ENCODE measurements at regions of chr5 and their contacts with region 1.

Region 1: DNA sequence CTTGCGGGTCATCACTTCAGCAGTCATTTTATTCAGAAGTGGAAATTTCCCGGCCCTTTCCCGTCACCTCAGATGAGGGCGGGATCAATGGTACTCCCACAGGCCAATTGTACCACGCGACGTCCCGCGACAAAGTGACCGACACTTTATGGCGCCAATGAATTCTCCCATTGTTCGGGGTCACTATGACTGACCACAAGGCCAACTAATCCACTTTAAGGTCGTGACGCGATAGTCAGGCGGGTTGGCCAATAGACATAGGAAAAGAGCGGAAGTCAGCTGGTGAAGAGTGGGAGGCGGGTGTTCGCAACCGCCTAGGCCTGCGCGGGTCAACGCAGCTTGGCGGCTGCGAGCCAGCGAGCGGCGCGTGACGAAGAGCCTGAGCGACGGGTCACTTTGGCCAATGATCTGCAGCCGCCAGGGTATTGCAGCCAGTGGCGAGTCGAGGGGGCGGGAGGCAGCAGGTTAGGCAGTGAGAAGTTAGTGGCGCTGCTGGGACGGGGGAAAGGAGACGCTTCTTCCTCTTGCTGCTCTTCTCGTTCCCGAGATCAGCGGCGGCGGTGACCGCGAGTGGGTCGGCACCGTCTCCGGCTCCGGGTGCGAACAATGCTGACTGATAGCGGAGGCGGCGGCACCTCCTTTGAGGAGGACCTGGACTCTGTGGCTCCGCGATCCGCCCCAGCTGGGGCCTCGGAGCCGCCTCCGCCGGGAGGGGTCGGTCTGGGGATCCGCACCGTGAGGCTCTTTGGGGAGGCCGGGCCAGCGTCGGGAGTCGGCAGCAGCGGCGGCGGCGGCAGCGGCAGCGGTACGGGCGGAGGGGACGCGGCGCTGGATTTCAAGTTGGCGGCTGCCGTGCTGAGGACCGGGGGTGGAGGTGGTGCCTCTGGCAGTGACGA is at the start of gene ANKHD1:
- DNase-seq: peak; percentile 99
- ATAC-seq: peak; percentile 88
- H3K4me3 Mint-ChIP-seq: no peak within 1 kb of the TSS
- H3K27ac Mint-ChIP-seq: no peak within 1 kb of the TSS
- H3K4me1 Mint-ChIP-seq: peaks cover 33% of the 10 kb centered on the region
- H3K27me3 Mint-ChIP-seq: no peaks in the 10 kb centered on the region
- total RNA-seq, gene ANKHD1: 108 to 112 TPM

Region 2: DNA sequence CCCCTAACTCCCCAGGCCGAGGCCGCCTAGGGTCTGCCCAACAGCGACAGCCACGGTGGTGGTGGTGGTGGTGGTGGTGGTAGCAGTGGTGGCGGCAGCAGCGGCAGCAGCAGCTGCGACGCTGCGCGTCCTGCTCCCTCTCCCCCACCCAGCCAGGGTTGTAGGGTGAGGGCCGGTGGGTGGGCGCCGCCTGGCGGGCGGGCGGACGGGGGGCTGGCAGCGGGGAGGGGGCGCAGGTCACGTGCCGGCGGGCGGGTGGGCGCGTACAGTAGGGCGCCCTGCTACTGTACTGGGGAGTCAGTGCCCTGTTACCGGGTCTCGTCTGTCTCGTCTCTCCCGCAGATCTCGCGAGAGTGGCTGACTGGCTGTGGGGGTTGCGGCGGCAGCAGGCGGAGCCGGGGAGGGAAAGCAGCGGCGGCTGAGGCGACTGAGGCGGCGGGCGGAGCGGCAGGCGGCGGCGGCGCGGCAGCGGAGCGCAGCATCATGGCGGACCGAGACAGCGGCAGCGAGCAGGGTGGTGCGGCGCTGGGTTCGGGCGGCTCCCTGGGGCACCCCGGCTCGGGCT is 287.8 kb before region 1 on chr5 and contains the start of gene PURA:
- CTCF ChIA-PET with region 1: no interaction called
- POLR2A ChIA-PET with region 1: no interaction called
- DNase-seq: peak; percentile 97
- ATAC-seq: peak; percentile 91
- H3K4me3 Mint-ChIP-seq: peak within 1 kb of the TSS; percentile 93
- H3K27ac Mint-ChIP-seq: peak within 1 kb of the TSS; percentile 94
- H3K4me1 Mint-ChIP-seq: peaks cover 70% of the 10 kb centered on the region
- H3K27me3 Mint-ChIP-seq: peaks cover 23% of the 10 kb centered on the region
- total RNA-seq, gene PURA: 12.5 to 13.4 TPM

Region 3: GRCh38 chr5:140321796-140322195 is 79.8 kb before region 1 on chr5:
- CTCF ChIA-PET with region 1: no interaction called
- POLR2A ChIA-PET with region 1: no interaction called
- DNase-seq: no peak
- ATAC-seq: no peak
- H3K4me3 Mint-ChIP-seq: no peak overlapping the region
- H3K27ac Mint-ChIP-seq: no peak overlapping the region
- H3K4me1 Mint-ChIP-seq: no peaks in the 10 kb centered on the region
- H3K27me3 Mint-ChIP-seq: peaks cover 6% of the 10 kb centered on the region

Region 4: DNA sequence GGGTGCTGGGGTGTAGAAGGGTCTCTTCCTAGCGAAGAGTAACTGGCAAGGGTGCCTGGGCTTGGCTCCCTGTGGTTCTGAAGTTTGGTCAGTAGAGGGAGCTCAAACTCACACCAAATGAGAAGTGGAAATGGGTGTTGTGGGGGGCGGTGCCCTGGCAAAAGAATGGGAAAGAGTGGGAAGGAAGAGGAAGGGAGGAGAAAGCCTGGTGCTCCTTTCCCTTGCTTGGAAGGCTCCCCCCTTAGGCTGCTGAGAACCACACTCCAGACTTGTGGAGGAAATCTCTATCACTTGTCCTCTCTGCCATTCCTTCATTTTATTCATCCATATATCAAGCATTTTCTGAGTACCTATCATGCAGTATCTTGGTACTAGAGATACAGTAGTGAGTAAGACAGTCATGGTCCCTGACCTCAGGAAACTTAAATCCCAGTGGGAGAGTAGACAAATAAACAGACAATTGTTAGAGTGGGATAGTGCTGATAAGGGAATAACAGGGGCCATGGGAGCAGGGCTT is 28.6 kb before region 1 on chr5:
- CTCF ChIA-PET with region 1: interaction called, 21 read pairs
- POLR2A ChIA-PET with region 1: no interaction called
- DNase-seq: peak; percentile 59
- ATAC-seq: peak; percentile 63
- H3K4me3 Mint-ChIP-seq: no peak overlapping the region
- H3K27ac Mint-ChIP-seq: no peak overlapping the region
- H3K4me1 Mint-ChIP-seq: peaks cover 7% of the 10 kb centered on the region
- H3K27me3 Mint-ChIP-seq: no peaks in the 10 kb centered on the region

Region 5: DNA sequence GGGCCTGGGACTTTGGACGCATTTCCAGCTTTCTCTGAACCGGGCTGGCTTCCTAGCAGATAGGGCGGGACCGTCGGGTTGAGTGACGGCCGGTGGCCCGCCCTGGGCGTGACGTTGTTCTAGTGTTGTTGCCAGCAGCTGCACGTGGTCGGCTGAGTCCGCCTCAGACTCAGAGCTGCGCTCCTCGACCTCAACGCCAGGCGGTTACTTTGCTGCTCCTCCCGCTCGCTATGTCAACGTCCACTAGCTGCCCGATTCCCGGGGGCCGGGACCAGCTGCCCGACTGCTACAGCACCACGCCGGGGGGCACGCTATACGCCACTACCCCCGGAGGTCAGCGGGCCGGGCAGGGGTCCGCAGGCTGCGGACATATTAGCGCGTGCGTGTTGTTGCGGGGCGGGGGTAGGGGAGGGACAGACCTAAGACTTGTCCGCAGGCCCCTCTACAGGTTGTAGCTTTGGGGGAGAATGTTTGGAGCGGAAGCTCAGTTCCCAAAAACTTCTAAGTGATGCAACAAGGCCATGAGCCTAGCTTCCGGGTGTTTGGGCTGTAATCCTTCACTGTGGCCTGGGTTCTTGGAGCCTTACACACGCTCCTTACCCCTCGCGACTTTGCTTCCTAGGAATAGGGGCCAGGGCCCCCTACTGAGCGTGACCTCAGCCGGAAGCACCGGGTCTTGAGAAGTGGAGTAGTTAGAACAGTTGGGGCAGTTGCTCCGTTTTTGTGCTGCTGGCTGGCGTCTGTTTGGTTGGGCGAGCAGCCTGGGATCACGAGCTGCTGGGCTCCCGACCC is 146.1 kb after region 1 on chr5 and contains the start of gene EIF4EBP3:
- CTCF ChIA-PET with region 1: no interaction called
- POLR2A ChIA-PET with region 1: interaction called, 10 read pairs
- DNase-seq: peak; percentile 91
- ATAC-seq: peak; percentile 97
- H3K4me3 Mint-ChIP-seq: peak within 1 kb of the TSS; percentile 80
- H3K27ac Mint-ChIP-seq: peak within 1 kb of the TSS; percentile 95
- H3K4me1 Mint-ChIP-seq: peaks cover 42% of the 10 kb centered on the region
- H3K27me3 Mint-ChIP-seq: no peaks in the 10 kb centered on the region
- total RNA-seq, gene EIF4EBP3: 7.4 to 8.6 TPM

Region 6: GRCh38 chr5:140609126-140609525 is 207.5 kb after region 1 on chr5:
- CTCF ChIA-PET with region 1: no interaction called
- POLR2A ChIA-PET with region 1: no interaction called
- DNase-seq: no peak
- ATAC-seq: no peak
- H3K4me3 Mint-ChIP-seq: no peak overlapping the region
- H3K27ac Mint-ChIP-seq: no peak overlapping the region
- H3K4me1 Mint-ChIP-seq: peaks cover 11% of the 10 kb centered on the region
- H3K27me3 Mint-ChIP-seq: peaks cover 13% of the 10 kb centered on the region